ENCODE measurements at regions of chr20 and their contacts with region 1.

Region 1: GRCh38 chr20:37345339-37346230 is at the start of gene SRC:
- DNase-seq: peak; percentile 84
- H3K4me3 Mint-ChIP-seq: peak within 1 kb of the TSS; percentile 80
- H3K27ac Mint-ChIP-seq: peak within 1 kb of the TSS; percentile 56
- H3K4me1 Mint-ChIP-seq: peaks cover 20% of the 10 kb centered on the region
- H3K27me3 Mint-ChIP-seq: no peaks in the 10 kb centered on the region
- total RNA-seq, gene SRC: 3.6 and 5.4 TPM in 2 replicates

Region 2: DNA sequence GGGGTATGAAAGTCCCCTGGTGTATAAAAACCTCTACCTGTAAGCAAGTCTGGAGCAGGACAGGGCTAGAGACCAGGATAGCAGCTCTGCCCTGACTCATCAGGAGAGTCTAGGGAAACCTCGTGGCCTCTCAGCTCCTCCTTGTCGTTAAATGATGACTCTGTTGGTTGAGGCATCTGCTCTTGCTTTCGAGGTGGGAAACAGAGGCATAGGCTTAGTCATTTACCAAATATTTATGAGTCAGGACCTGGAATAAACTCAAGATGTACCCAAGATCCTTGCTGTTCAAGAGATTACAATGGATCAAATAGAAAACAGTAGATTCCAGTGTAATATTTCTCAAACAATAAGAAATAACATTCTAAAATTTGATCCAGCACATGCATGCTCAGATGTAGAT is 50.6 kb before region 1 on chr20:
- intact Hi-C with region 1: loop called (anchors 5 kb)
- DNase-seq: no peak
- H3K4me3 Mint-ChIP-seq: no peak overlapping the region
- H3K27ac Mint-ChIP-seq: no peak overlapping the region
- H3K4me1 Mint-ChIP-seq: peaks cover 40% of the 10 kb centered on the region
- H3K27me3 Mint-ChIP-seq: no peaks in the 10 kb centered on the region